Activated CD4-positive, alpha-beta memory T cell treated with anti-CD3 and anti-CD28 coated beads for 36 hours (primary cell): ENCODE measurements at regions of chr10 and their contacts with region 1.

Region 1: GRCh38 chr10:58282615-58283014 is 13.7 kb downstream of the CISD1 start:
- DNase-seq: peak; percentile 45
- H3K4me3 Mint-ChIP-seq: peak overlapping the region; percentile 33
- H3K27ac Mint-ChIP-seq: peak overlapping the region; percentile 65
- H3K4me1 Mint-ChIP-seq: peaks cover 38% of the 10 kb centered on the region
- H3K27me3 Mint-ChIP-seq: no peaks in the 10 kb centered on the region

Region 2: DNA sequence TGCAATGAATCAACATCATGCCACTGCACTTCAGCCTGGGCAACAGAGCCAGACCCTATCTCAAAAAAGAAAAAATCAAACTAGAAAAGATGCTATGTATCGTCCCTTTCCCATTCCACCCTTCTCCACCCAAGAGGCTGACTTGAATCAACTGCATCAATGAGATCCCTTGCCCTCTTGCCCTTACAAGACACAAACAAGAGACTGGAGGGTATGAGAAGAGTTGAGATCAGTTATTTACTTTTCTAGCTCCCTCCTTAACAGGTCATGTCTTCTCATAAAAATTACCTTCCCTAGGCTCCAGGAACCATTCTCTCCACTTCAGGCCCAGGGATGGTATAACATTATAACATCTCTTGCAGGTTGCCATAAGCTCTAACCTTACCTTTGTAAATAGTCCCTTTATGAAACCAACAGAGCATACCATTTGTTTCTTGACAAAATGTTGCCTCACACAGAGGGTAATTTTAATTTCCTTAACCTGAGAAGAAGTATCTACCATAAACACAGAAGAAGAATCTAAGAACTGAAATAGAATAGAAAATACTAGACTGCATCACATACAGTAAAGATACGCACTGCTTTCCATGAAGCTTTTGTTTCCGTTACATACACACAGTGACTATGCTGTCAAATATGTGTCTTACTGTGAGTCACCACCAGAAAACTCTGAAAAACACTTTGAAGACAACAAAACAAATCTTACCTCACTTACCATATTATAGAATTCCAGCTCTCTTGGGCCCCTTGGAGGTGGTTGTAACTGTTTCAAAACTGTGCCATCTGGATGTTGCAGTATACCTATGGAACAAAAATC is 45.4 kb before region 1 on chr10:
- CTCF ChIA-PET with region 1: no interaction called
- POLR2A ChIA-PET with region 1: no interaction called
- intact Hi-C with region 1: loop called (anchors 1 kb)
- DNase-seq: no peak
- H3K4me3 Mint-ChIP-seq: no peak overlapping the region
- H3K27ac Mint-ChIP-seq: peak overlapping the region; percentile 64
- H3K4me1 Mint-ChIP-seq: peaks cover 37% of the 10 kb centered on the region
- H3K27me3 Mint-ChIP-seq: no peaks in the 10 kb centered on the region

Region 3: GRCh38 chr10:58334817-58335305 is 52.2 kb after region 1 on chr10 and contains the start of gene UBE2D1:
- CTCF ChIA-PET with region 1: no interaction called
- POLR2A ChIA-PET with region 1: no interaction called
- intact Hi-C with region 1: loop called (anchors 2 kb)
- DNase-seq: peak; percentile 88
- H3K4me3 Mint-ChIP-seq: peak within 1 kb of the TSS; percentile 96
- H3K27ac Mint-ChIP-seq: peak within 1 kb of the TSS; percentile 75
- H3K4me1 Mint-ChIP-seq: peaks cover 29% of the 10 kb centered on the region
- H3K27me3 Mint-ChIP-seq: peaks cover 6% of the 10 kb centered on the region
- total RNA-seq, gene UBE2D1: 14.5 to 14.8 TPM

Region 4: GRCh38 chr10:58513188-58514110 is 230.8 kb after region 1 on chr10:
- CTCF ChIA-PET with region 1: no interaction called
- POLR2A ChIA-PET with region 1: no interaction called
- intact Hi-C with region 1: loop called (anchors 1 kb)
- DNase-seq: peak; percentile 9
- H3K4me3 Mint-ChIP-seq: peak overlapping the region; percentile 64
- H3K27ac Mint-ChIP-seq: no peak overlapping the region
- H3K4me1 Mint-ChIP-seq: peaks cover 15% of the 10 kb centered on the region
- H3K27me3 Mint-ChIP-seq: peaks cover 38% of the 10 kb centered on the region

Region 5: DNA sequence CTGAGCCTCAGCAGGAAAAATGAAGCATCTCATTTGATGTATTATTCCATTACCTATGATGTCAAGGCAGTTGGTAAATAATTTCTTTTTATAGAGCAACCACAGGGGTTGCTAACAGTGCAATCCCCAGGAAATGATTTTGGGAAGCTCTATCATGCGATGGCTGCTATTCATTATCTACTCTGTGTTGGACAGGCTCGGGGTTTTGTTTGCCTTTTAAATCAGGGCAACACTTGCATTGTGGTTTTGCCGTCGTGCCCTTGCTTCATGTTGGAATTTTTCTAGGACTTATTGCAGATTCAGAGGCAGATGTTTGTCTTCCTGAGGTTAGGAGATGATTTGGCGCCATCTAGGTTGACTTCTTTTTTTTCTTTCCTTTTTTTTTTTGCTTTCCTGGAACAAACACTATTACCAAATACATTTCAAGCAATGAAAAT is 358.5 kb after region 1 on chr10:
- CTCF ChIA-PET with region 1: no interaction called
- POLR2A ChIA-PET with region 1: no interaction called
- intact Hi-C with region 1: no loop called
- DNase-seq: no peak
- H3K4me3 Mint-ChIP-seq: no peak overlapping the region
- H3K27ac Mint-ChIP-seq: no peak overlapping the region
- H3K4me1 Mint-ChIP-seq: no peaks in the 10 kb centered on the region
- H3K27me3 Mint-ChIP-seq: no peaks in the 10 kb centered on the region